ENCODE measurements at regions of chr7 and their contacts with region 1.

Region 1: DNA sequence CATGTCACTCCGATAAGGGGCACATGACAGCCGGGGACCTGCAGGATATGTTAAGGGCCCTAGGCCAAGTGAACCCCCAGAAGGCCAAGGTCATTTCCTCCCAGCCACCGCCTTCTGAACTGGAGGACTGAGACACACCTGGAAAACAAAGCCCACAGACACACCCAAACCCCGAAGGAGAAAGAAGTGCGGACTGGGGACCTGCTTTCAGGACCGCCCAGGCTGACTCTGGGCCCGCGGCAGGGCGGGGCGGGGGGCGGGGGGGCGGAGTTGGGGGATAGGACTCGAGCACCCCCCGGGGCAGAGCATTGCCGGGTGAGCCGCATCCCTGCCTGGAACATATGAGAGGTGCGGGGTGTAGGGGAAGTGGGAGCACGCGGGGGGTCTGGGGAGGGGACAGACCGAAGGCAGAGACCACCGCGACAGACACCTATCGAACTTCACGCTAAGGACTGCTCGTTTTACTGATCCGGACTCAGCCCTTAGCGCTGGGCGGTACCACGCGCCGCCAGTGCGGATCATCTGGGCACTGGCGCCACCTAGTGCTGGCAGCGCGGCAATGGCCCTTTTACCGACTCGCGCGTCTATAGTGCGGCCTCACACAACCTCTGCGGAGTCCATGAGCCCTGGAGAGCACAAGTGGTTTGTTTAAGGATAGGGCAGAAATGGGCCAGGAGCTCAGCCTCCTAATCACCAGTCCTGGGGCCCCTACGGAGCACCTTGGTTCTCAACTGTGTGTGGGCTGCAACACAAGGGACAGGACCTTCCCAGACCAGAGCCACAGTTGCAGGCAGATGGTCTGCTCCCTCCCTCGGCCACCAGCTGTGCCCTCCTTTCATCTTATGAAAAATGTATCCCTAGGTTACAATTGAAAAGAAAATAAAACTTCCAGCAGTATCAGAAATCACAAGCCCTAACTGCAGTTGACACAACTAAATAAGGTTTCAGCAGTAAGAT is 157.6 kb downstream of the HERPUD2 start:
- DNase-seq: peak; percentile 74 to 88
- ATAC-seq: peak; percentile 97 to 99 (median 99)
- H3K4me3 ChIP-seq: peak overlapping the region; percentile 20
- H3K4me3 Mint-ChIP-seq: peak overlapping the region; percentile 80
- H3K27ac ChIP-seq: no peak overlapping the region
- H3K27ac Mint-ChIP-seq: no peak overlapping the region
- H3K4me1 ChIP-seq: peaks cover 4% of the 10 kb centered on the region
- H3K4me1 Mint-ChIP-seq: peaks cover 0 to 4% of the 10 kb centered on the region in 2 donors
- H3K27me3 ChIP-seq: no peaks in the 10 kb centered on the region
- H3K27me3 Mint-ChIP-seq: peaks cover 8 to 10% of the 10 kb centered on the region in 2 donors
- CTCF ChIP-seq: peak; percentile 92

Region 2: GRCh38 chr7:34823640-34824258 is 713.6 kb before region 1 on chr7:
- intact Hi-C with region 1: loop called (anchors 1 kb)
- DNase-seq: peak; percentile 26 to 63
- ATAC-seq: peak in 1 of 3 donors; percentile 53
- H3K4me3 ChIP-seq: no peak overlapping the region
- H3K4me3 Mint-ChIP-seq: no peak overlapping the region
- H3K27ac ChIP-seq: no peak overlapping the region
- H3K27ac Mint-ChIP-seq: no peak overlapping the region
- H3K4me1 ChIP-seq: no peaks in the 10 kb centered on the region
- H3K4me1 Mint-ChIP-seq: no peaks in the 10 kb centered on the region
- H3K27me3 ChIP-seq: no peaks in the 10 kb centered on the region
- H3K27me3 Mint-ChIP-seq: peaks cover 3 to 9% of the 10 kb centered on the region in 2 donors
- CTCF ChIP-seq: peak; percentile 93

Region 3: GRCh38 chr7:35380739-35381224 is 156.6 kb before region 1 on chr7:
- intact Hi-C with region 1: no loop called
- DNase-seq: no peak
- ATAC-seq: no peak
- H3K4me3 ChIP-seq: no peak overlapping the region
- H3K4me3 Mint-ChIP-seq: no peak overlapping the region
- H3K27ac ChIP-seq: no peak overlapping the region
- H3K27ac Mint-ChIP-seq: no peak overlapping the region
- H3K4me1 ChIP-seq: no peaks in the 10 kb centered on the region
- H3K4me1 Mint-ChIP-seq: no peaks in the 10 kb centered on the region
- H3K27me3 ChIP-seq: no peaks in the 10 kb centered on the region
- H3K27me3 Mint-ChIP-seq: peaks cover 6 to 31% of the 10 kb centered on the region in 2 donors
- CTCF ChIP-seq: no peak

Measured in natural killer cell (primary cell).